ENCODE measurements at regions of chr12 and their contacts with region 1.

Region 1: DNA sequence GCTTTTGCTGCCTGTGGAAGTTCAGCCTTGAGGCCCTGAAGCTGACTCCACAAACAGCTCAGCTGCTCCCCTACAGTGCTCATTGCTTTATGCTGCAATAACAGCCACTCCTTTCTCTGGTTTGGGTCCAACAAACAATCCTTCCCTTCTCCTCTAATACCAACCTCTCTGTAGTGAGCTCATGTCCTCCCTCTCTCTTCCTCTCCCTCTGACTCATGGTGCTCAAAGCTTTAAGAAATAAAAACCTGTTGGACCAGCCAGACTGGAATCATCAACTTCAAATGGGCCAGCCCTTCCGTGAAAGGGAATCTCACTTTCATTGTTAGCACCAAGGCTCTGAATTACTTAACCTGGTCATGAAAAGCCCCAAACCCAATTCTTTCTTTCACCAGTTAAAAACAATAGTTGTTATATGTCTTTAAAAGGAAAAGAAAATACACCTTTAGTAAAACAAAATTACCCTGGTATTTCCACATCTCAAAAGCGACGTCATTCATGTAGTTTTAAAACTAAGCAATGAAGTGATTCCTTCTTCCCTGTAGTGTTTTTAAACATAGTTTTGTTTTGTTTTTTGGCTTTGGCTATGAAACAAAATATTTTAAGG is 126.4 kb downstream of the DUSP6 start:
- DNase-seq: peak; percentile 86
- H3K4me3 Mint-ChIP-seq: peak overlapping the region; percentile 70
- H3K27ac Mint-ChIP-seq: peak overlapping the region; percentile 99
- H3K4me1 Mint-ChIP-seq: peaks cover 70% of the 10 kb centered on the region
- H3K27me3 Mint-ChIP-seq: no peaks in the 10 kb centered on the region

Region 2: GRCh38 chr12:88141770-88142609 is 1083.9 kb before region 1 on chr12 and contains the starts of genes CEP290 and TMTC3:
- CTCF ChIA-PET with region 1: no interaction called
- intact Hi-C with region 1: loop called (anchors 5 kb)
- DNase-seq: peak; percentile 95
- H3K4me3 Mint-ChIP-seq: peak within 1 kb of the TSS; percentile 91
- H3K27ac Mint-ChIP-seq: peak within 1 kb of the TSS; percentile 90
- H3K4me1 Mint-ChIP-seq: peaks cover 40% of the 10 kb centered on the region
- H3K27me3 Mint-ChIP-seq: no peaks in the 10 kb centered on the region
- total RNA-seq, gene CEP290: 12.7 to 13.6 TPM
- total RNA-seq, gene TMTC3: 5.2 TPM

Region 3: DNA sequence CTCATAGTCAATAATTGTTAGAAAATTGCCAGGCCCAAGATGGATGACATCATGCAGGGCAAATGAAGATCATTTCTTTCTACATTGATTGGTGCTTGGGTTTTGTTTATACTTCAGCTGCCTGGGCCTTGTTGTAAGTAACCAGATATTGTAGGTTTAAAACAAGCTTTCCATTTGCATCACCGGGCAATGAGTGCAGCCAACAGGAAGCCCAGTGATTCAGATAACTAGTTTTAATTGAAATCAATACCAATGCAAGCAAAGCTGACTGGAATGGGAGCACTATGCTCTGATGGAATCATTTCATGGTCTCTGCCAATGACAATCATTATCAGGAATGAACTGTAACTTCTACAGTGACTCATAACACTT is 152.9 kb before region 1 on chr12:
- CTCF ChIA-PET with region 1: no interaction called
- intact Hi-C with region 1: loop called (anchors 1 kb)
- DNase-seq: peak; percentile 32
- H3K4me3 Mint-ChIP-seq: no peak overlapping the region
- H3K27ac Mint-ChIP-seq: peak overlapping the region; percentile 57
- H3K4me1 Mint-ChIP-seq: peaks cover 36% of the 10 kb centered on the region
- H3K27me3 Mint-ChIP-seq: no peaks in the 10 kb centered on the region

Region 4: DNA sequence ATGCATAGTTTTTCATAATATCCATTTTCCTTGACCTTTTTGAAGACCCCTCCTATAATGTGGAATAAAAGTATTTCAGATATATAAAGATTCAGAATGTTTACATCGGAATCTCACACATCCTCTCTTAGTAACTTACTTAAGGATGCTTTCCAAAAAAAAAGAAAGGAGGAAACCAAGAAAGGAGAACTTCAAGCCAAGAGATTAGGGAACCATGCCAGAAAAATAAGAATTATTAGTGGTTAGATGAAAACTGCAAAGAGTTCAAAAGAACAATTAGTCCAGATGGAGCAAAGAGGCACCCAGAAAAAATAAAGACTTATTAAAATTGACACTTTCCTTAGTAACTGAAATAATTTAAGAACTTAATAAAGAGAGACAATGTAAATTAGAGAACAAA is 52.8 kb before region 1 on chr12:
- CTCF ChIA-PET with region 1: no interaction called
- intact Hi-C with region 1: no loop called
- DNase-seq: no peak
- H3K4me3 Mint-ChIP-seq: no peak overlapping the region
- H3K27ac Mint-ChIP-seq: no peak overlapping the region
- H3K4me1 Mint-ChIP-seq: no peaks in the 10 kb centered on the region
- H3K27me3 Mint-ChIP-seq: no peaks in the 10 kb centered on the region

Region 5: DNA sequence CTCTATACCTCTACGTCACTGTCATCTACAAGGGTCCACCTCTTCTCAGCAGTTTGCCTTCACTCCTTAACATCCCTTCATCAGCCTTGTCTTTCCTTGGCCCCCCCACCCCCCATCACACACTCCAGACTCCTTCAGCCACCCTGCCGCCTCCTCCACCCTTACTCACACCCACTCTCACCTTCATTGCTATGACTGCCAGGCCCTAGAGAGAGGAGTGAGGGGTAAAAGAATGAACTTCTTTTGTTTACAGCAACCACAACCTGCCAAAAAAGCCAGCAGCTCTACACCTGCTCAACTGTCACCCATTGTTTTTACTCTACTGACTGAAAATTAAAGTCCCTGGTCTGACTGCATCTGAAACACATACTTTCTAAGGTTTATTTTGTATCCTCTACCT is 13.6 kb after region 1 on chr12:
- CTCF ChIA-PET with region 1: interaction called, 13 read pairs
- intact Hi-C with region 1: loop called (anchors 1 kb)
- DNase-seq: no peak
- H3K4me3 Mint-ChIP-seq: no peak overlapping the region
- H3K27ac Mint-ChIP-seq: no peak overlapping the region
- H3K4me1 Mint-ChIP-seq: peaks cover 59% of the 10 kb centered on the region
- H3K27me3 Mint-ChIP-seq: no peaks in the 10 kb centered on the region

Region 6: DNA sequence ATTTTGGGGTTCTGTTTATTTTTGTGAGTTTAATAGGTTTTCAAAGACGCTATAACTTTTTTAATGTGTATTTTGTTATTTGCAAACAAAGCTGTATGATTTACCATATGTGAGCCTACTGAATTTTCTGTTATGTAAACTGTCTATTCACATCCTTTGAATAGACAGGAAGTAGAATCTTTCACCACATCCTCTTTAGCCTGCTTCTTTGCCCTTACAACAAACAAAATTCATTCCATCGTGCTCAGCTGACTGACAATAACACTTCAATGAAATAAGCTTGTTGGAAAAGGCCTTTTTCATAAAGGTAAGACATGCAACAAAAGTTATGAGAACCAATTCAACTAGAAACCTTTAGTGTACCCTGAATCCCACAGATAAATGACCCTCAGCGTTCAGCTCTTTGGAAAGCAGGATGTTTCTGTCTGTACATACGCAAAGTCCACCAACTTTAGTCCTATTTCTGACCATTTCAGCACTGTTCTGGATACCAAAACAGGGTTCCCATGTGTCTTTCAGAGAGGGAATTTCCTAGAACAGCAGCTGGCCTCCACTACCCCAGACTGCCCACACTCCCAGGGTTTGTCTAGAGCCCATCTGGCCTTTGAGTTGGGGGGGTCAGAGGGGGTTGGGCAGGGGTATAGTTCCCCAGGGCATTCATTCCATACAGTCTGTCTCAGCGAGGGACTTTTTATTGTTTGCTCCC is 55.1 kb after region 1 on chr12:
- CTCF ChIA-PET with region 1: interaction called, 3 read pairs
- intact Hi-C with region 1: loop called (anchors 1 kb)
- DNase-seq: no peak
- H3K4me3 Mint-ChIP-seq: peak overlapping the region; percentile 36
- H3K27ac Mint-ChIP-seq: peak overlapping the region; percentile 71
- H3K4me1 Mint-ChIP-seq: peaks cover 30% of the 10 kb centered on the region
- H3K27me3 Mint-ChIP-seq: no peaks in the 10 kb centered on the region

Region 7: DNA sequence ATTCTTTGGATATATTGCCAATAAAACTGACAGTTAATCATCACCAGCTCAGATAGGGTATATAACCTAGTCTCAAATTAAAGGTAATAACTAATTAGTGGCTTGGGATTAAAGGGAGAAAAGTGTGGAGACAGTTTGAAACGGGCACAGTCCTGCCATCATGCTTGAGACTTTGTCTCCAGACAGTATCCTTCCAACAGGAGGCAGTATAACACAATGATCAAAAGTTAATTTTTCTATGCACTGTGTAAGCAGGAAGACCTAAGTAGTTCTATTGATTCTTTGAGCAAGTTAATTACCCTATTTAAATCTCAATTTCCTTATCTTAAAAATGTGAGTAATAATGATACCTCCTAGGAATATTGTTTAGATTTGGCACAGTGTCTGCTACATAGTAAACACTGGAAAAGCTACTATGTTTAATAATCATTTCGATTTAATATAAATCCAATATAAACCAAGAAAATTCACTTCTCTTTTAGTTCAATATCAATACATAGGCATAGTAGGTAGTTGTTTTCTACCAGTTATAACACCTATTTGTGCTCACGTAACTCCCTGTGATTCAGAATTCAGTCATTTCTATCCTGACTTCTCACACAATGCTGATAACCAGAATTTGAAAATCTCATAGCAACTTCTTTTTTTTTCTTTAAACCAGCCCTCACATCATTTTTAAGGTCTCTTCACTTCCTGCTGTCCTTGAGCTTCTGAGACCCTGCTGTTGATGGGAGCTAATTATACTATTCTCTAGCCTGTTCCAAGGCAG is 245.0 kb after region 1 on chr12:
- CTCF ChIA-PET with region 1: no interaction called
- intact Hi-C with region 1: no loop called
- DNase-seq: no peak
- H3K4me3 Mint-ChIP-seq: no peak overlapping the region
- H3K27ac Mint-ChIP-seq: no peak overlapping the region
- H3K4me1 Mint-ChIP-seq: peaks cover 44% of the 10 kb centered on the region
- H3K27me3 Mint-ChIP-seq: no peaks in the 10 kb centered on the region

Region 8: DNA sequence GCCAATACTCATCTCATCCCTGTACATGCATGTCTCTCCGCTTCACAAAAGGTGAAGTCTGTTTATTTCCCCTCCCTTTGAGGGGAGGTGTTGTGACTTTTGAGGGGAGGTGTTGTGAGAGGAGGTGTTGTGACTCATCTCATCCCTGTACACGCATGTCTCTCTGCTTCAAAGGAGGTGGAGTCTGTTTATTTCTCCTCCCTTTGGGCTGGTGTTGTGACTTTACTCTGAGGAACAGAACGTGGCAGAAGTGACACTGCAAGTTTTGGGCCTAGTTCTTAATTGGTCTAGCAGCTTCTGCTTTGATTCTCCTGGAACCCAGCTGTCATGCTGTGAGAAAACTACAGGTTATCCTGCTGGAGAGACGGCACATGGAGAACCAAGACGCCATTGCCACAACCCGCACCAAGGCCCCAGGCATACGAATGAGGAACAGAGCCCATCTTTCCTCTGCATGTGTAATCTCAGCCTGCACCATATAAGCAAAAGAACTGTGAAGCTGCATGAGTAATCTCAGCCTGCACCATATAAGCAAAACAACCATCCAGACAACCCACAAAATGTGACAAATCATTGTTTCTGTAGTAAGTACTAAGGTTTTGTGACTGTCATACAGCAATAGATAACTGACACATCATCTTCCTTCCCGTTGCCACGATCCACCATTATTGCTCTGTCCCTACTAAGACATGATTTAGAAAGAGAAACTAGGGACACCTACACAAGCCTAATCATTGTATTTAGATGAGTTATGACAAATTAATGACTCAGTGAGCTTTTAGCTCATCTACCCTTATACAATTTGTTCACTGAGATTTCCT is 268.7 kb after region 1 on chr12:
- CTCF ChIA-PET with region 1: no interaction called
- intact Hi-C with region 1: loop called (anchors 1 kb)
- DNase-seq: peak; percentile 73
- H3K4me3 Mint-ChIP-seq: peak overlapping the region; percentile 5
- H3K27ac Mint-ChIP-seq: peak overlapping the region; percentile 77
- H3K4me1 Mint-ChIP-seq: peaks cover 17% of the 10 kb centered on the region
- H3K27me3 Mint-ChIP-seq: no peaks in the 10 kb centered on the region

Region 9: GRCh38 chr12:89882050-89882449 is 656.1 kb after region 1 on chr12:
- CTCF ChIA-PET with region 1: no interaction called
- intact Hi-C with region 1: loop called (anchors 2 kb)
- DNase-seq: peak; percentile 53
- H3K4me3 Mint-ChIP-seq: no peak overlapping the region
- H3K27ac Mint-ChIP-seq: peak overlapping the region; percentile 63
- H3K4me1 Mint-ChIP-seq: peaks cover 42% of the 10 kb centered on the region
- H3K27me3 Mint-ChIP-seq: no peaks in the 10 kb centered on the region